Heart right ventricle (tissue), 16 donors: ENCODE measurements at regions of chr11 and their contacts with region 1.

Region 1: GRCh38 chr11:80383655-80384054 is 942.8 kb upstream of the TENM4 start:
- DNase-seq: no peak
- ATAC-seq: no peak
- H3K4me3 ChIP-seq: no peak overlapping the region
- H3K27ac ChIP-seq: no peak overlapping the region
- H3K4me1 ChIP-seq: no peaks in the 10 kb centered on the region
- H3K27me3 ChIP-seq: no peaks in the 10 kb centered on the region
- CTCF ChIP-seq: no peak

Region 2: GRCh38 chr11:80155412-80156017 is 228.1 kb before region 1 on chr11:
- intact Hi-C with region 1: no loop called
- DNase-seq: no peak
- ATAC-seq: peak in 1 of 8 donors; percentile 22
- H3K4me3 ChIP-seq: no peak overlapping the region
- H3K27ac ChIP-seq: no peak overlapping the region
- H3K4me1 ChIP-seq: no peaks in the 10 kb centered on the region
- H3K27me3 ChIP-seq: no peaks in the 10 kb centered on the region
- CTCF ChIP-seq: peak in 8 of 9 donors; percentile 20 to 62 (median 47)

Region 3: DNA sequence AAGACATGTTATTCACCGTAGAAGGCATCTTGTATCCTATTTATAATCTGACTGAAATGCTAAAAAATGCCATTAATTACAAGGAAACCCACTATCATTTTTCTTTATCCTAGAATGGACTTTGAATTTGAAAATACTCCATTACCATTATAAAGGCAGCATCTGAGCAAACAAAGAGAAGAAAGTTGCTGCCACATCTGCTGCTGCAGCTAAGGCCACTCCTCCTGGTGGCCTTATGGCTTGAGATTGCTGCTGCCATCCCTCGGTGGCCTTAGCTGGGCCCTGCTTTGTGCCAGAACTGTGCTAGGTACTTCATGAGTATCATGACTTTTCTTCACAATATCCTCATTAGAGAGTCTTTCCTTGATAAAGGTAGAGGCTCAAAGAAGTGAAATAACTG is 267.3 kb after region 1 on chr11:
- intact Hi-C with region 1: loop called in 1 of 10 experiments (anchors 5 kb)
- DNase-seq: no peak
- ATAC-seq: no peak
- H3K4me3 ChIP-seq: no peak overlapping the region
- H3K27ac ChIP-seq: no peak overlapping the region
- H3K4me1 ChIP-seq: no peaks in the 10 kb centered on the region
- H3K27me3 ChIP-seq: peaks cover 0 to 3% (median 0%) of the 10 kb centered on the region in 7 donors
- CTCF ChIP-seq: no peak